ENCODE measurements at regions of chr9 and their contacts with region 1.

Region 1: DNA sequence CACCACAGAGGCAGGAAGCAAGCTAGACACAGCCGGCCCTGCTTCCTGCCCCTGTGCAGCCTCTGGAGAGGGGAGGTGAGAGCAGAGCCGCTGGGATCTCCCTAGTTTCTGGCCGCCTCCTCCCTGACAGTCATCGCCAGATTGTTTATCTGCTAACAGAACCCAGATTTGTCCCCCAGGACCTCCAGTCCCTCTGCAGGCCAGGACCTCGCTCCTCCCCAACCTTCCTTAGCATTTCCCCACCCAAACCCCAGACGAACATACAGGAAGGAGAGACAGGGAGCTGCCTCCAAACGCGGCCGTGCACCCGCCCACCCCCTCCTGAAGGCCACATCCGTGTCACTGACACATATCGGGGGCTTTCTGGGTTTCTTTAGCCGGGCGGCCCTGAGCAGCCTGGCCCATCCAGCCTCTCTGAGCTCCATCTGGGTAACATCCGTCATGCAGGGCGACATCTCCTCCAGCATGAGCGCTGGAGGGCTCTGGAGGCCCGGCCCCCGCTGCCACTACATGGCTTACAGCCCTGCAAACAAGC is 47.5 kb downstream of the DBH start:
- DNase-seq: no peak

Region 2: GRCh38 chr9:133584559-133585476 is 98.8 kb before region 1 on chr9:
- intact Hi-C with region 1: loop called (anchors 5 kb)
- DNase-seq: no peak

Region 3: GRCh38 chr9:133715866-133716563 is 32.4 kb after region 1 on chr9:
- intact Hi-C with region 1: loop called (anchors 2 kb)
- DNase-seq: no peak

Measured in cardiac septum (tissue), 1 donor.